CD8-positive, alpha-beta memory T cell (primary cell): ENCODE measurements at regions of chr7 and their contacts with region 1.

Region 1: DNA sequence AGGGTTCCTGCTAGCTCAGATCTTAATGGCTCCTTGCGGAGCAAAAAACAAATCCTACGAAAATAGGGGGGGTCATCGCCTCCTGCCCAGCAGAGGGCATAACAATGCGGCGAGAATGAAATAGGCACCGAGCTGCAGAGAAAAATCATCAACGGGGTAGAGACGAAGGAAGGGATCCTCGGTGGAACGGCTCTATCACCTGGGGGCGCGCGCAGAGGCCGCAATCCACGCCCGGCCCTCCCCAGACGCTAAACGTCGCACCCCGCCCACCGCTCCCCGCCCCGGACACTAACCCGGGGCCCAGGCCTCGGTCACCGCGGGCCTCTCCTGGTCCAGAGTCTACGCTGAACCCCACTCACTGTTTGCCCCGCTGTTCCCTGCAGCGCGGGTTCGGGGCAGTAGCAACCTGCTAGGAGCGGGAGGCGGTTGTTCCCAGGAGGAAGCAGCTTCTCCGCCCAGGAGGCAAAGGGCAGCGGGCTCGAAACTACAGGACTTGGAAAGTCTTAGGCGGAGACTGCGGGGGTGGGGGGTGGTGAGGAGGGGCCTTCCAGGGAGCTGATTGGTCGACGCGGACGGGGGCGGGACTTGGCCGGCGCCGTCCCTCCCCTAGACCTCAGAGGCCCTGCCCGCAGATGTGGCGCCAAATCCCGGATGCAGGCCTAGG is at the start of gene TCAF1:
- DNase-seq: peak; percentile 84 to 91 (median 85)
- H3K4me3 ChIP-seq: peak within 1 kb of the TSS; percentile 76
- H3K4me3 Mint-ChIP-seq: peak within 1 kb of the TSS; percentile 92 to 98 (median 95)
- H3K27ac ChIP-seq: peak within 1 kb of the TSS; percentile 83
- H3K27ac Mint-ChIP-seq: peak within 1 kb of the TSS; percentile 82 to 98 (median 96)
- H3K4me1 ChIP-seq: peaks cover 26% of the 10 kb centered on the region
- H3K4me1 Mint-ChIP-seq: peaks cover 25 to 42% (median 36%) of the 10 kb centered on the region in 3 donors
- H3K27me3 ChIP-seq: no peaks in the 10 kb centered on the region
- H3K27me3 Mint-ChIP-seq: no peaks in the 10 kb centered on the region
- total RNA-seq, gene TCAF1: 11.8 to 13.6 TPM

Region 2: DNA sequence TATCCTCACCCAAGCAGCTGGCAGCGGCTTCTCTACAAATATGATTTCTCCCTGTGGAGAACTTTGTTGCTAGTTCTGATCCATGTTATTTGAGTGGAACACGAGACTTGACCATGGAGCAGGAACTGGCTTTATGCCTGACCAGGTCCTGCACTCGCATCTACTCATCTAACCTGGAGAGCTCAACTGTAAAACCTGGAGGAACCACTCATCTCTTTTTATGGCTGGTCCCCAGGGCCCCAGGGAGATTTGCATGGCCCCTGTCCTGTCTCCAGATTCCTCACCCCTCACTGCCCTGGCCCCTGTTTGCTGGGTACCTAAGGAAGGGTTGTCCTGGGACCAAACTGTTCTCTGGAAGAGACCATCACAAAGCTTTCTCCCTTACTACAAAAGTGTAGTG is 15.8 kb before region 1 on chr7:
- CTCF ChIA-PET with region 1: interaction called, 10 read pairs
- POLR2A ChIA-PET with region 1: interaction called, 3 read pairs
- DNase-seq: no peak
- H3K4me3 ChIP-seq: no peak overlapping the region
- H3K4me3 Mint-ChIP-seq: no peak overlapping the region
- H3K27ac ChIP-seq: no peak overlapping the region
- H3K27ac Mint-ChIP-seq: no peak overlapping the region
- H3K4me1 ChIP-seq: no peaks in the 10 kb centered on the region
- H3K4me1 Mint-ChIP-seq: peaks cover 16 to 35% (median 32%) of the 10 kb centered on the region in 3 donors
- H3K27me3 ChIP-seq: peaks cover 5% of the 10 kb centered on the region
- H3K27me3 Mint-ChIP-seq: peaks cover 22 to 58% of the 10 kb centered on the region in 2 donors

Region 3: DNA sequence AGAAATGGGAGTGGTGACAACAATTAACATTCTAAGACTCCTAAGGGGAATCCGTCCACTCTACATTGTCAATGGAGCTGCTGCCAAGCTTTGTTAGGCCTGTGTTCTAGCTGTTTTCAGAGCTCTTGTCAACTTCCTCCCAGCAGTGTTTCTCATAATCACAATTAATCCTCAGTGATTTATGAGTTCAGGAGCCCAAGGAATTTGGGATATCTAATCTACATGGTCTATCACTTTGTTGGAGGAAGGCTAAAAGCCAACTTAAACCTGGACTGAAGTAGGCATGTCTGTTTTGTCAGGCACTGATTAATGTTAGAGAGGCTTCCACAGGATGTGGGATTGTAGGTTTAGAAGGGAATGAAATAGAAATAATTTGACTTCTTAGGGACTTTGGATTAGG is 23.1 kb after region 1 on chr7:
- CTCF ChIA-PET with region 1: no interaction called
- POLR2A ChIA-PET with region 1: no interaction called
- DNase-seq: no peak
- H3K4me3 ChIP-seq: no peak overlapping the region
- H3K4me3 Mint-ChIP-seq: no peak overlapping the region
- H3K27ac ChIP-seq: no peak overlapping the region
- H3K27ac Mint-ChIP-seq: no peak overlapping the region
- H3K4me1 ChIP-seq: no peaks in the 10 kb centered on the region
- H3K4me1 Mint-ChIP-seq: no peaks in the 10 kb centered on the region
- H3K27me3 ChIP-seq: peaks cover 8% of the 10 kb centered on the region
- H3K27me3 Mint-ChIP-seq: peaks cover 17 to 42% of the 10 kb centered on the region in 2 donors